Ovary (tissue), 10 donors: ENCODE measurements at regions of chr9 and their contacts with region 1.

Region 1: GRCh38 chr9:18410983-18411382 is 63.0 kb upstream of the ADAMTSL1 start:
- DNase-seq: no peak
- H3K4me3 ChIP-seq: no peak overlapping the region
- H3K27ac ChIP-seq: no peak overlapping the region
- H3K4me1 ChIP-seq: no peaks in the 10 kb centered on the region
- H3K27me3 ChIP-seq: no peaks in the 10 kb centered on the region
- CTCF ChIP-seq: no peak
- EP300 ChIP-seq: no peak
- POLR2A ChIP-seq: no peak

Region 2: GRCh38 chr9:18122171-18122570 is 288.8 kb before region 1 on chr9:
- intact Hi-C with region 1: loop called in 1 of 4 experiments (anchors 5 kb)
- DNase-seq: no peak
- H3K4me3 ChIP-seq: no peak overlapping the region
- H3K27ac ChIP-seq: no peak overlapping the region
- H3K4me1 ChIP-seq: peaks cover 5% of the 10 kb centered on the region
- H3K27me3 ChIP-seq: no peaks in the 10 kb centered on the region
- CTCF ChIP-seq: no peak
- EP300 ChIP-seq: no peak
- POLR2A ChIP-seq: no peak